Right lobe of liver (tissue), 6 donors: ENCODE measurements at regions of chr3 and their contacts with region 1.

Region 1: DNA sequence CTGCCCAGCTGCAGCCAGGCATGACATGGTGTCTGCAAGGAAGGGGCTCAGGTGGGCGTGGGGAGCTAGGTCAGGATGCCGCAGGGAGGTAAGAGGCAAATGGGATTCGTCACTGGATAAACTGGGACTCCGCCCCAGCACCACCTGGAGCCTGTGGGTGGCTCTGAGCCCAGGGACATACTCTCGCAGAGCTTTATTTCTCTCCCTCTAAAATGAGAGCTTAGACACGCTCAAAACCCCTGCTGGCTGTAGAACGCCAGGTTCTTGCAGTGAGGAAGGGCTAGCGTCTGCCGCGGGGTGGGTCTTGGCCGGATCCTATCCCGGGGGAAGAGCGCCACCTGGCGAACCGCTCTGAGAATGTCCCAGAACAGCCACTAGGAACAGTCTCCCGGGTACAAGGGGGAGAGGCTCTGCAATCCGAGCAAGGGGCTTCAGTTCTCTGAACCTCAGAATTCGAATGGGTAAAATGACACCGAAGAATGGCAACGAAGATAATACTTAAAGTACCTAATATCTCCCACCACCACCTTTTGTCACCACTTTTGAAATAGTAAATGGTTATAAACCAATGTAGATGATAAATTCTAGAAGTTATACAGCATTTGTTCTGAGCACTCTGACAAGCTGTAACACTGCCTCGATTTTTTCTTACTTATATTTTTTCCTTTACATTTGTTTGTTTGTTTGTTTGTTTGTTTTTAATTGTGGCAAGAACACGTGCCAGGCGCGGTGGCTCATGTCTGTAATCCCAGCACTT is 53.2 kb upstream of the SRGAP3 start:
- DNase-seq: peak; percentile 65 to 76 (median 74)
- ATAC-seq: peak; percentile 97 to 99 (median 97)
- H3K4me3 ChIP-seq: no peak overlapping the region
- H3K27ac ChIP-seq: no peak overlapping the region
- H3K4me1 ChIP-seq: no peaks in the 10 kb centered on the region
- H3K27me3 ChIP-seq: no peaks in the 10 kb centered on the region
- CTCF ChIP-seq: peak; percentile 78 to 90 (median 86)
- POLR2A ChIP-seq: no peak

Region 2: DNA sequence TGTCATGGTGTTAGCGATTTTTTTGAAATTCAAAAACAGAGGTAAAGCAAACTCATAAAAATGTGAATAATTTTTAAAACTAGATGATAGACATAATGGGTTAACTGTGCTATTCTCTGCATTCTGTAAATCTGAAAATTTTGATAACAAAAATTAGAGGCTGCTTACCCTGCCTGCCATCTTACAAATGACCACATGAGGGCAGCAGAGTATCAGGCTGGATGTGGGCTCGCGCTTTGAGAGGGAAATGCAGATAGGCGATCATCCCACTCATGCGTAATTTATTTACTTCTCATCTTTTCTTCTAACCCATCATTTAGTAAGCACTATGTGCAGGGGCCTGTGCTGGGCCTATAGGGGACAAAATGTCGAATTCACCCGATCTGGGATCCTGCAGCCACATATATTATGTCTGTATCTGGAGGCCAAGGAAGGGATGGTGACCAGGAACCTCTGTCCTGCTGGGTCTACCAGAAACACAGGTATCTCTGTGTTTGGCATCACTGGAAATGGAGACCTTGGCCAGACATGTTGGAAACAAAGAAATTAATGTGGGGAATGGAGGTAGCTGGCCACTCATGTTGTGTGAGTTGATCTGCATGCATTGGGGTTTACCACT is 331.5 kb before region 1 on chr3:
- intact Hi-C with region 1: loop called (anchors 5 kb)
- DNase-seq: peak in 1 of 3 donors; percentile 60
- ATAC-seq: peak; percentile 81 to 89 (median 86)
- H3K4me3 ChIP-seq: no peak overlapping the region
- H3K27ac ChIP-seq: no peak overlapping the region
- H3K4me1 ChIP-seq: peaks cover 0 to 7% (median under 1%) of the 10 kb centered on the region in 4 donors
- H3K27me3 ChIP-seq: no peaks in the 10 kb centered on the region
- CTCF ChIP-seq: peak; percentile 98 to 99 (median 98)
- POLR2A ChIP-seq: no peak

Region 3: DNA sequence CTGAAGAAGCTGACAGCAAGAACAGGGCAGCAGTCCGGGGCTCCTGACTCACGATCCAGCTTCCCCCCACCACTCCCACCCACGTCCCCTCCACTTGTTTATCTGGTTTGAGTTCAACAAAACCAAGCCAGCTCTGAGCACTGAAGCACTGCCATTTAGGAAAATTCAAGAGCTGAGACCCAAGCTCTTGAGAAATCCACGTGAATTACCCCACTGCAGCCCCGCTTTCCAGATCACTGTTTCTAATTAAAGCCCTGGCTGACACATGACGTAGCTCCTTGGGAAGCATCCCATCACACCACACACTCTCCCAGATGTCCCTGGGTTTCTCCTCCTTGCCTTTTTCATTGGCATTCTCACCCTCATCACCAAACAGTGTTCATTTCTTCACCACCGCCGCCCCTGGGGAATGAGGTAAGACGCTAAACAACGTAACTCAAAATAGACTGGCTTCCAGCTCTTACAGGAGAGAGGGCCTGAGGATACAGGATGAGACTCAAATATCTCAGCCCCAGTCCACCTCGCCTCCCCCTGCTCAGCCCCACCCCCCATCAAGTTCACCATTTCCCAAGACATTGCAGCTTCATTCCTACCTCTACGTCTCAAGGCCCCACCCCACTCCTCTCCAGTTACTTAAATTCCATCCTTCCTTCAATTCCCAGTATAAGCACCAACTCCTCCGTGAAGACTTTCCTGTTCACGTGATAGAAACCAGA is 148.5 kb before region 1 on chr3:
- intact Hi-C with region 1: no loop called
- DNase-seq: no peak
- ATAC-seq: no peak
- H3K4me3 ChIP-seq: no peak overlapping the region
- H3K27ac ChIP-seq: no peak overlapping the region
- H3K4me1 ChIP-seq: no peaks in the 10 kb centered on the region
- H3K27me3 ChIP-seq: no peaks in the 10 kb centered on the region
- CTCF ChIP-seq: no peak
- POLR2A ChIP-seq: no peak

Region 4: DNA sequence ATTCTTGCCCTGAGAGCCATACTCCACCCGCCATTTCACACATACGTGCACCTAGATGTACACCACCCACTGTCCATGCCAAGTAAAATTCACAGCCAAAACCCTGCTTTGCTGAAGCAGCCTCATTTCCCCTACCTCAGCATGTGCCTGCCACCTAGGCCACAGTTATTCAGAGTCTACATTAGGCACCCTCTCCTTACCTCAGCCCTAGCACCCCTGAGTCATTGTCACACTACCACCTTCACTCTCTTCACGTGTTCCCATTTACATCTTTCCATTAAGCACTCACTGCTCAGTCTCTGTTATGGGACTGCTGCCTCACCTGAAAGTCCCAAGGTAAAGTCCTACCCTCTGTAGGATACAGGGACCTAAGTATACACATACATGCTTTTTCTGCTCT is 164.8 kb after region 1 on chr3:
- intact Hi-C with region 1: no loop called
- DNase-seq: no peak
- ATAC-seq: no peak
- H3K4me3 ChIP-seq: no peak overlapping the region
- H3K27ac ChIP-seq: no peak overlapping the region
- H3K4me1 ChIP-seq: no peaks in the 10 kb centered on the region
- H3K27me3 ChIP-seq: no peaks in the 10 kb centered on the region
- CTCF ChIP-seq: no peak
- POLR2A ChIP-seq: no peak